HEK293 (cell line): ENCODE measurements at regions of chr5 and their contacts with region 1.

Region 1: DNA sequence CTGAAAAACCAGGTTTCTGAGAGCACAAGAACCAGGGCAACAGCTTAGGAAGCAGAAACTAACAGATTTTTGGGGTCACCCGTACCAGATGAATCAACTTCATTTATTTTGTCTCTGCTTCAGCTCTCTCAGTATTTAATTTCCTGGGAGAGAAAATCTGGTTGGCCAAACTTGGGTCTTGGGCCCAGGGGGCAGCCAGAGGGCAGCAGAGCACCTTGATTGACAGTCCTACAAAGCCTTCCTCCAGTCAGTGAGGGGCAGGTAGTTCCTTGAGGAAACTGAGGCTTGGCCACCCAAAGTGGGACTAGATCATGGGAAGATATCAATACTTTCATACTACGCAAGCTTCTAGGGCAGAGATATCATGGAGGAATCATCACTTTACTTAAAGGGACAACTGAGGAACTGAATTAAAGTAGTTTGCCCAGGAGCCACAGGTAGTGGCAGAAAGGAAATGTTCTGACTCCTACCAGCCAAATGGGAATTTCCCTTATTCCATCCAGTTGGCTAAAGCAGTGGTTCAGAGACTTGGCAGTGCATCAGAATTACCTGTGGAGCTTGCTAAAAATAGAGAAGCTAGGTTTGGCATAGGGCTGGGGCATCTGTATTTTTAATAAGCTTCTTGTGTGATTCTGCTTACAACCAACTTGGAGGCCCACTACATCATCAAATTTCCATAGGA is 21.5 kb upstream of the ARHGAP26 start:
- H3K4me3 ChIP-seq: no peak overlapping the region
- H3K27ac ChIP-seq: no peak overlapping the region
- H3K4me1 ChIP-seq: no peaks in the 10 kb centered on the region
- CTCF ChIP-seq: peak; percentile 63; the same call in 1 of the 2 replicates

Region 2: DNA sequence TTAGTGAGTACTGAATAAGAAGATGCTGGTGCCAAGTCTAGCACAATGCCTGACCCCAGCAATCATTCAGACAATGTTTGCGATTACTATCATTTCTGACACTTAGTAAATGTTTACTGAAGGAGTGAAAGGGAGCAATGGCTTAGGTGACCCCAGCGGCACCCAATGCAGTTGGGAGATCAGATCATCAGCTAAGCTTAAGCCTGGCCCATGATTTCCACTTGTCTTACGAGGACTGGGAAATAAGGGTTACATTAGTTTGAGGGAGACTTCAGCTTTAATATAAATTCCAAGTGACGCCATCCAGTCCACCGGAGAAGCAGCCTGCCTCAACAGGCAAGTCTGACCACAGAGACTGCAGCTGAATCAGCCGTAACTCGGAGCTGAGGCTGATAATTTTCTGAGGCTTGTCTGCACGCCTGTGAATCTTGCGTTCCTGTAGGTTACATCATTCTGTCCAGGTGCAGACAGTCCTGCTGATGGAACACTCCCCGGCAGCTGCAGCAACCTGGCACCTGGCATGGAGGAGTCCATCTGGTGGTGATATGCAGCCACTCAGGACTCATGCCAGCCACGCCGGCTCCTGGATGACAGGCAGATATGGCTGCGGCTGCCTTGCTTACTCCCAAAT is 28.0 kb before region 1 on chr5:
- CTCF ChIA-PET with region 1: interaction called, 35 read pairs
- POLR2A ChIA-PET with region 1: no interaction called
- H3K4me3 ChIP-seq: no peak overlapping the region
- H3K27ac ChIP-seq: no peak overlapping the region
- H3K4me1 ChIP-seq: no peaks in the 10 kb centered on the region
- CTCF ChIP-seq: no peak

Region 3: DNA sequence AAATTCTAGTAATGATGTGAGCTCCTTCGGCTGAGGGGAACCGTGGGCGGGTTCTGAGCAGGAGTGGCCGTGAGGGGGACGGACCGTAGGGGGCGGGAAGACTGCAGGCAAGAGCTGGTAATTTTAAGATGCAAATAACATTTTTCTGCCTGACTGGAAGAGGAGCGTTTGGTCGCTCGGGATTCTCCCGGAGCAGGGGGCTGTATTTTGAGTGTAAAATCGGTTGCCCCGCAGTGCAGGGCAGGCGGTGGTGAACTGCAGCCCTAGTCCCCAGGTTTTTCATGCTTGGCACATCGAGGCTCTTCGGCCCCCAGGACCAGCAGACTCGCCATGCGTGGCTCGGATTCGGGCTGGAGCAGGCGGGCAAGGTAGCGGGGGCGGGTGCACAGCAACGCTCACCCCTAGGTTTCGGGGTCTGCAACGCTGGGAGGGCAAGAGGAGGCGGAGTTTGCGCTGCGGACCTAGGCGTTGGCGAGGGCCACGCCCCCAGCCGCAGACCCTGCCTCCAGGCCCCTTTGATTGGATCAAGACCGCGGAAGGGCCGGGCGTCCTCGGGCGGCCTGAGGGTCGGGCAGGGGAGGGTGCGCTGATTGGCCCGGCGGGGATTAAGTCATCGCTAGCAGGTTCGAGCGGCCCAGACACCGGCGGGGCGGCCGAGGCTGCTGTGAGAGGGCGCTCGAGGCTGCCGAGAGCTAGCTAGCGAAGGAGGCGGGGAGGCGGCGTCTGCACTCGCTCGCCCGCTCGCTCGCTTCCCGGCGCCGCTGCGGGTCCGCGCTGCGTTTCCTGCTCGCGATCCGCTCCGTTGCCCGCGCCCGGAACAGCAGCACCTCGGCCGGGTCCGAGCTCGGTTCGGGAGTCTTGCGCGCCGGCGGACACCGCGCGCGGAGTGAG is 21.3 kb after region 1 on chr5 and contains the start of gene ARHGAP26:
- CTCF ChIA-PET with region 1: interaction called, 23 read pairs
- POLR2A ChIA-PET with region 1: interaction called, 9 read pairs
- H3K4me3 ChIP-seq: peak within 1 kb of the TSS; percentile 93
- H3K27ac ChIP-seq: peak within 1 kb of the TSS; percentile 86
- H3K4me1 ChIP-seq: 0 out of 2 replicates have a peak, but pooled peaks cover 4% of the 10 kb centered on the region
- CTCF ChIP-seq: peak; percentile 71

Region 4: GRCh38 chr5:142874537-142874936 is 125.8 kb after region 1 on chr5:
- CTCF ChIA-PET with region 1: interaction called, 243 read pairs
- POLR2A ChIA-PET with region 1: no interaction called
- H3K4me3 ChIP-seq: no peak overlapping the region
- H3K27ac ChIP-seq: no peak overlapping the region
- H3K4me1 ChIP-seq: peaks cover 8% of the 10 kb centered on the region
- CTCF ChIP-seq: no peak

Region 5: GRCh38 chr5:142888469-142889085 is 139.9 kb after region 1 on chr5:
- CTCF ChIA-PET with region 1: interaction called, 243 read pairs
- POLR2A ChIA-PET with region 1: no interaction called
- H3K4me3 ChIP-seq: no peak overlapping the region
- H3K27ac ChIP-seq: no peak overlapping the region
- H3K4me1 ChIP-seq: no peaks in the 10 kb centered on the region
- CTCF ChIP-seq: peak; percentile 26; the same call in 1 of the 2 replicates

Region 6: GRCh38 chr5:143008809-143009521 is 260.3 kb after region 1 on chr5:
- CTCF ChIA-PET with region 1: no interaction called
- POLR2A ChIA-PET with region 1: no interaction called
- H3K4me3 ChIP-seq: no peak overlapping the region
- H3K27ac ChIP-seq: no peak overlapping the region
- H3K4me1 ChIP-seq: peaks cover 2% of the 10 kb centered on the region; the same call in 1 of the 2 replicates
- CTCF ChIP-seq: no peak